Heart left ventricle (tissue), 16 donors: ENCODE measurements at regions of chr2 and their contacts with region 1.

Region 1: GRCh38 chr2:226690461-226691024 is 109.1 kb downstream of the IRS1 start:
- DNase-seq: peak in 3 of 5 donors; percentile 37 to 43 (median 39)
- ATAC-seq: peak; percentile 56 to 84 (median 80)
- H3K4me3 ChIP-seq: peak overlapping the region in 6 of 12 donors; percentile 1 to 31 (median 15)
- H3K27ac ChIP-seq: peak overlapping the region in 11 of 12 donors; percentile 11 to 72 (median 69)
- H3K4me1 ChIP-seq: peaks cover 0 to 47% (median 33%) of the 10 kb centered on the region in 12 donors
- H3K27me3 ChIP-seq: no peaks in the 10 kb centered on the region
- CTCF ChIP-seq: no peak
- POLR2A ChIP-seq: no peak

Region 2: DNA sequence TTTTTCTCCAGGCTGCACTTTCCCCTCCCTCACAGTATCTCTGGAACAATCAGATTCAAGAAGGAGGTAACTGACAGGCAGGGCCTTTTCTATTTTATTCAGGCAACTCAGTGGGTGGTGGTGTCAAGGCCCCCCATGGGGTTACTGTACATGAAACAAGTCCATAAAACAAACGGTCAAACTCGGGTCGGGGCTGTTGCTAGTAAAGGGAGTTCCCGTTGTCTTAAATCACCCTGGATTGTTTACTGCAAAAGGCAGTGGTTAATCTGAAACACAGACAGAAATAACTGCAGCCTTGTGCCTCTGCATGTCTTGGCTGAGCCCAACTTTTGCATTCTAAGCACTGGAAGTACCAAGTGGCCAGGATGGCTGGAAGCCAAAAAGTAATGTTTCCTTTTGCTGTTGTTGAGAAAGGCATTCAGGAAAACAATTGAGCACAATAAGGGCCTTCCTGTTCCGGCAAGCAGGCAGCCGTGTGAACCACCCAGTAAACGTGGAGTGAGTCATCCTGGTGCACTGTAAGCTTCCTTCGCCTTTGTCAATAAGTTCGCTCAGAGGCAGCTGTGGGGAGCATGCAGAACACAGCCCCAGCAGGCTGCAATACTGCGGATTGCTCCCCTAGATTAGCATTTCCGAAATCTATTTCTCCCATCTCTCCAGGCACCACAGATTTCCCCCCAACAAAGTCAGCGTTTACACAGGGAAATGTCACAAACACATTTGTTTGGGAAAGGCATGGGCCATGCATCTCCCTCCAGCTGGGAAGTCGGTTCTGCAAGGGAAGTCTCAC is 40.5 kb before region 1 on chr2:
- intact Hi-C with region 1: loop called in 1 of 10 experiments (anchors 1 kb)
- DNase-seq: peak in 4 of 5 donors; percentile 66 to 80 (median 76)
- ATAC-seq: peak; percentile 87 to 98 (median 96)
- H3K4me3 ChIP-seq: no peak overlapping the region
- H3K27ac ChIP-seq: peak overlapping the region; percentile 34 to 86 (median 78)
- H3K4me1 ChIP-seq: peaks cover 0 to 33% (median 24%) of the 10 kb centered on the region in 12 donors
- H3K27me3 ChIP-seq: no peaks in the 10 kb centered on the region
- CTCF ChIP-seq: no peak
- POLR2A ChIP-seq: no peak

Region 3: DNA sequence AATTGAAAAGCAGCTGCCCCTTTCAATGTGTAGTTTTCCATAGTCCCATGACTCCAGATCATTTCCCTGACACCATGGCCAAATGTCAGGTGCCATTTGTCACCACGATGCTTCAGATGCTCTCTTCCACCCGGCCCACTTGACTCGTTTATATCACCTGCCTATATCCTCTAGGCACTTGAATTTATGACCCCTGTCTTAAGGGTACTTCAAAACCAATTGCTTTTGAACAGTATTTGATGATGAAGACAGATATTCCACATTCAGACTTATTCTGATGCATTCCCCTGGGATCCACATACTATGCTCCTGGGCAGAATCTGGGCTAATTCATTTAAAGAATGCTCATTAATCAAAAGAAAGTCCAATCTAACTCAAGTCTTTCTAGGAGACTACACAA is 128.4 kb after region 1 on chr2:
- intact Hi-C with region 1: no loop called
- DNase-seq: no peak
- ATAC-seq: no peak
- H3K4me3 ChIP-seq: no peak overlapping the region
- H3K27ac ChIP-seq: no peak overlapping the region
- H3K4me1 ChIP-seq: no peaks in the 10 kb centered on the region
- H3K27me3 ChIP-seq: no peaks in the 10 kb centered on the region
- CTCF ChIP-seq: no peak
- POLR2A ChIP-seq: no peak